Psoas muscle (tissue), 8 donors: ENCODE measurements at regions of chr3 and their contacts with region 1.

Region 1: DNA sequence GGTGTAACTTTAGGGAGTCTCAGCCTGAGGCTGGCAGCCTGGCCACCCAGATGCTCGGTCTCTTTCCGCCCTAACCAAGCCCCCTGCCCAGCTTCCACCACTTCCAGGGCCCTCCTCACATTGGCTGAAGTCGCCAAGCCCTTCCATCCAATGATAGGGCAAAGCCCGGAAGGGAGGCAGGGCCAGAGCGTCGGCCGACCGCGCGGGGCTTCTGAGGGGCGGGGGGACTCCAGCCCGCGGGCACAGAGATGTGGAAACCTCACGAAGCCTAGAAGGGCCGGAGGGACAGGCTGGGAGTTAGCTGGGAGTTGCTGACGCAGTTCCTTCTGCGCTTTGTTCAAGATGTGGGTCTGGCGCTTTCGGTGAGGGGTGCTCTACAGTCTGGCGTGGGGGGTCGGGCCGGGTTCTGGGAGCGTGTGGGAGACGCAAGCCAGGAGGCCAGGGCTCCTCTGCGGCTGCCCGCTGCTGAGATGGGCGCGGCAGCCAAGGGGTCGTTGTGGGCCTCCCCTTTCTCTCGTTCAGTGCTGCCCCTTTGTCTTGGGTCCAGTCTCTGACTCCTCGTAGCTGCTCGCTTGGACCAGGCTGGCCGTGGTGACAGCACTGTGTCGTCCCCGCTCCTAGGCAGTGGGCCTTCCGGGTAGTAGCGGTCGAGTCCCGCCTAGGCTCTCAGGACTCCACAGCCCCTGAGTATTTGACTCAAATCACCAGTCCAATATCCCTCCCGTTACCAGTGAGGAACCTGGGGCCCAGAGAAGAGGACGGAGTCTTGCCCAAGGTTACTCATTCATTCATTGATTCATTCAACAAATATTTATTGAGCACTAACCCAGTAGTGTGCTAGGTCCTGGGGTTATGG is at the start of gene ZNF660:
- DNase-seq: peak; percentile 69 to 72
- ATAC-seq: peak; percentile 49 to 92 (median 84)
- H3K4me3 ChIP-seq: peak within 1 kb of the TSS; percentile 67
- H3K27ac ChIP-seq: peak within 1 kb of the TSS; percentile 48
- H3K4me1 ChIP-seq: no peaks in the 10 kb centered on the region
- H3K27me3 ChIP-seq: no peaks in the 10 kb centered on the region
- CTCF ChIP-seq: no peak
- total RNA-seq, gene ZNF660: 0.24 to 1.2 (median 0.74) TPM

Region 2: GRCh38 chr3:44554626-44555592 is 30.0 kb before region 1 on chr3 and contains the start of gene ZKSCAN7:
- intact Hi-C with region 1: loop called in 1 of 2 experiments (anchors 1 kb)
- DNase-seq: peak; percentile 64 to 75
- ATAC-seq: peak; percentile 64 to 91 (median 80)
- H3K4me3 ChIP-seq: peak within 1 kb of the TSS; percentile 71
- H3K27ac ChIP-seq: peak within 1 kb of the TSS; percentile 41
- H3K4me1 ChIP-seq: peaks cover 7% of the 10 kb centered on the region
- H3K27me3 ChIP-seq: peaks cover 0 to 2% (median 0%) of the 10 kb centered on the region in 3 donors
- CTCF ChIP-seq: no peak
- total RNA-seq, gene ZKSCAN7: 0.99 to 2.1 (median 1.2) TPM